ENCODE measurements at regions of chr13 and their contacts with region 1.

Region 1: GRCh38 chr13:99766641-99767045 is 204.9 kb downstream of the ZIC5 start:
- DNase-seq: peak; percentile 33 to 63
- H3K4me3 ChIP-seq: no peak overlapping the region
- H3K27ac ChIP-seq: no peak overlapping the region; the same call in 1 of the 2 replicates
- H3K4me1 ChIP-seq: peaks cover 5 to 12% (median 7%) of the 10 kb centered on the region in 4 experiments; a peak in 5 of 7 replicates
- H3K27me3 ChIP-seq: no peaks in the 10 kb centered on the region
- CTCF ChIP-seq: peak in 2 of 3 experiments; percentile 64 to 78; a peak in 3 of 4 replicates
- EP300 ChIP-seq: no peak
- POLR2A ChIP-seq: no peak
- RAD21 ChIP-seq: peak; percentile 89 to 92

Region 2: DNA sequence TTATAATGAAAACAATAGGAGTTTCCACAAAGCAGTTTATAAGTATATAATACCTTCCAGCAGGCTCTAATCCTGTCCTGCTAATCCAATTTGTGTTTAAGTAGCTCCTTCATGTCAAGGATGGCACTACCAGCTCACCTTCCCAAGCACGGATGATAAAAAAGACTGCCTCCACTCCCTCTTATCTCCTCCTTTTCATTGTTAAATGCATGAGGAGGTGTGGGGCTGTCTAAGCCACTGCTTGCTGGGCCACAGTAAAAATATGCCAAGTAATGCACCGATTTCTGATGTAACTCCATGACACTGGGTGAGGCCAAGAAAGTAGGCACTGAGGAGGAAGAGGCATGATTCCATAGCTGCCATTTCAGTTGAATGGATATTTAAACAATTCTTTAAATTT is 11.9 kb after region 1 on chr13:
- CTCF ChIA-PET with region 1: interaction called, 13 read pairs
- POLR2A ChIA-PET with region 1: no interaction called
- DNase-seq: no peak
- H3K4me3 ChIP-seq: no peak overlapping the region
- H3K27ac ChIP-seq: no peak overlapping the region
- H3K4me1 ChIP-seq: no peaks in the 10 kb centered on the region; a peak in 1 of 7 replicates
- H3K27me3 ChIP-seq: no peaks in the 10 kb centered on the region
- CTCF ChIP-seq: no peak
- EP300 ChIP-seq: no peak
- POLR2A ChIP-seq: no peak
- RAD21 ChIP-seq: no peak